PC-3 (cell line): ENCODE measurements at regions of chr17 and their contacts with region 1.

Region 1: DNA sequence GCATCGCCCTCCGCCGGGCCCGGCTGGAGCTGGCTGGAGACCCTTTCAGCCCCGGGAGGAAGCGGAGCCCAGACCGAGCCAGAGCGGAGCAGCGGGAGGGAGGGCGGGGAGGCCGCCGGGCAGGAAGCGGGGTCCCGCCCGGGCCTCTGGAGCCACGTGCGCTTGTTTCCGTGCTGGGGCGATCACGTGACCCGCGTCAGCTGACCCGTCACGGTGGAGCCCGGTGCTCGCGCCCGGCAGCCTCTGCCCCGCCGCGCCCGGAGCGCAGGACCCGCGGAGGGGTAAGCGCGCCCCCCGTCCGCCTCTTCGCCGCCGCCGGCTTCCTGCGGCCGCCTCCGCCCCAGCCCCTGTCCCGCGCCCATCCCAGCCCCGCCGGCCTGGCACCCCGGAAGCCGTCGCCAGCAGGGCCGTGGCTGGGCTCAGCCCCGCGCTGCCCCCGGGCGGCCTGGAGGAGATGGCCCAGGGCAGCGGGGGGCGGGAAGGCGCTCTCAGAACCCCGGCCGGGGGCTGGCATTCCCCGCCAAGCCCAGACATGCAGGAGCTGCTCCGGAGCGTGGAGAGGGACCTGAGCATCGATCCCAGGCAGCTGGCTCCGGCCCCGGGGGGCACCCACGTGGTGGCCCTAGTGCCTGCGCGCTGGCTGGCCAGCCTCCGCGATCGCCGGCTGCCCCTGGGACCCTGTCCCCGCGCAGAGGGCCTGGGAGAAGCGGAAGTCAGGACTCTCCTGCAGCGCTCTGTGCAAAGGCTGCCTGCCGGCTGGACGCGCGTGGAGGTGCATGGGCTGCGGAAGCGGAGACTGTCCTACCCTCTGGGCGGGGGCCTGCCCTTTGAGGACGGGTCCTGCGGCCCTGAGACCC is at the start of gene WDR81:
- DNase-seq: peak; percentile 59
- ATAC-seq: peak; percentile 71
- H3K4me3 ChIP-seq: peak within 1 kb of the TSS; percentile 74
- H3K27ac ChIP-seq: peak within 1 kb of the TSS; percentile 26; the same call in 1 of the 2 replicates
- H3K4me1 ChIP-seq: peaks cover 8% of the 10 kb centered on the region; the same call in 1 of the 2 replicates
- H3K27me3 ChIP-seq: no peaks in the 10 kb centered on the region
- CTCF ChIP-seq: no peak
- total RNA-seq, gene WDR81: 14.6 and 16.4 TPM in 2 replicates

Region 2: DNA sequence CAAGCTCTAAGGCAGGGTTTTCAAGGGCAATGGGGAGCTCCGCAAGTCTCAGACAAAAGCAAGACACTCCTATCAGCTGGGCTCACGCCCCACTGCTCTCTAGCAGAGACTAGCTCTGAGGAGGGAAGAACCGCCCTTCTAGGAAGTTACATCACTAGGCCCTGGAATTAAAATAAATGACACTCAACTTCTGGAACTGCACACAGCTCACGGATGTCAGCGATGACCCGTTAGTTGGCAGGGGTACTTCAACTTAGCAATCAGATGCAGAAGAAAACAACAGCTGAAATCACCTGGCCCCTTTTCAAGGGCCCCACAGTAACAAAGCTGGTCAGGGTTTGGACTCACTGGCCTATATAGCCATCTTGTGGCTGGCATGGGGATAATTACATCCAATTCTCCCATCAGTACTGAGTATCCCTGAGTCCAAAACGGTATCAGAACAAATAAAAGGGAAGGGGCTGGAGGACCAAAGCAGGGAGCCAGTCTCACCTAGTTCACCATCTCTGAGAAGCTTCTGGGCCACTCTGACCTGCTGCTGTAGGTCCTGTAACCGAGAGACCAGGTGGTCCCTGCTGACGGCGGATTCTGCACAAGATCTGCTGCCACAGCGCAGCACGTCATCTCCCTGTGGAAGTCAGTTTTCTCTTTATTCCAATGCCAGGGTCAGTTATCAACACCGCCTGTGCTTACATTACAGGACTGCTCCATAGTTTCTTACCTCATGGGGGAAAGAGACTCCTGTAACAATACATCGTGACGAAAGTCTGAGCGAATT is 59.3 kb after region 1 on chr17:
- CTCF ChIA-PET with region 1: interaction called, 5 read pairs
- POLR2A ChIA-PET with region 1: interaction called, 4 read pairs
- intact Hi-C with region 1: loop called (anchors 2 kb)
- DNase-seq: peak; percentile 30
- ATAC-seq: no peak
- H3K4me3 ChIP-seq: no peak overlapping the region
- H3K27ac ChIP-seq: no peak overlapping the region
- H3K4me1 ChIP-seq: peaks cover 26% of the 10 kb centered on the region
- H3K27me3 ChIP-seq: no peaks in the 10 kb centered on the region
- CTCF ChIP-seq: peak; percentile 62

Region 3: GRCh38 chr17:1865252-1866037 is 140.7 kb after region 1 on chr17:
- CTCF ChIA-PET with region 1: no interaction called
- POLR2A ChIA-PET with region 1: no interaction called
- intact Hi-C with region 1: loop called (anchors 2 kb)
- DNase-seq: peak; percentile 64
- ATAC-seq: no peak
- H3K4me3 ChIP-seq: no peak overlapping the region
- H3K27ac ChIP-seq: no peak overlapping the region
- H3K4me1 ChIP-seq: no peaks in the 10 kb centered on the region
- H3K27me3 ChIP-seq: no peaks in the 10 kb centered on the region
- CTCF ChIP-seq: peak; percentile 64